ENCODE measurements at regions of chr6 and their contacts with region 1.

Region 1: GRCh38 chr6:99467509-99468106 is 42.5 kb upstream of the PNISR start:
- DNase-seq: peak in 5 of 9 donors; percentile 4 to 39 (median 26)
- ATAC-seq: no peak
- H3K4me3 ChIP-seq: no peak overlapping the region
- H3K4me3 Mint-ChIP-seq: no peak overlapping the region
- H3K27ac ChIP-seq: no peak overlapping the region
- H3K27ac Mint-ChIP-seq: no peak overlapping the region
- H3K4me1 ChIP-seq: no peaks in the 10 kb centered on the region
- H3K4me1 Mint-ChIP-seq: no peaks in the 10 kb centered on the region
- H3K27me3 ChIP-seq: no peaks in the 10 kb centered on the region
- H3K27me3 Mint-ChIP-seq: no peaks in the 10 kb centered on the region

Region 2: DNA sequence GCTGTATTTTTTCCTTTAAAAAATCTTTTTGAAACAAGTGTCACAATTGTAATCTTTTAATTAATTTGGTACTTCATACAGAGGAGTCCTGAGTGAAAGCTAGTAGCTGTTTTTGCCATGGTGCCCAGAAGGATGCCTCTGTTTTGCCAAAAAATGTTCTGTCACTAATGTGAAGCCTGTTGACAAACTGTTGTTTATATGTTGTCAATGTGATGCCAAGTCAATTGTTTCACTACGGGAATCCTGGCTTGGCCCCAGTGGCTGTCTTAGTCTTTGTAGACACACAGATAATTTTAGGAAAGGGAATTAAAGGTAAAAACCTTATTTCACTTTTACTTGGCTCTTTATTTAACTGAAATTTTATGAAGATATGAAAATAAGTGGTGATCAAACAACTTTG is 1478.2 kb before region 1 on chr6:
- CTCF ChIA-PET with region 1: no interaction called
- POLR2A ChIA-PET with region 1: no interaction called
- intact Hi-C with region 1: no loop called
- DNase-seq: no peak
- ATAC-seq: no peak
- H3K4me3 ChIP-seq: no peak overlapping the region
- H3K4me3 Mint-ChIP-seq: no peak overlapping the region
- H3K27ac ChIP-seq: no peak overlapping the region
- H3K27ac Mint-ChIP-seq: no peak overlapping the region
- H3K4me1 ChIP-seq: no peaks in the 10 kb centered on the region
- H3K4me1 Mint-ChIP-seq: no peaks in the 10 kb centered on the region
- H3K27me3 ChIP-seq: no peaks in the 10 kb centered on the region
- H3K27me3 Mint-ChIP-seq: no peaks in the 10 kb centered on the region

Region 3: DNA sequence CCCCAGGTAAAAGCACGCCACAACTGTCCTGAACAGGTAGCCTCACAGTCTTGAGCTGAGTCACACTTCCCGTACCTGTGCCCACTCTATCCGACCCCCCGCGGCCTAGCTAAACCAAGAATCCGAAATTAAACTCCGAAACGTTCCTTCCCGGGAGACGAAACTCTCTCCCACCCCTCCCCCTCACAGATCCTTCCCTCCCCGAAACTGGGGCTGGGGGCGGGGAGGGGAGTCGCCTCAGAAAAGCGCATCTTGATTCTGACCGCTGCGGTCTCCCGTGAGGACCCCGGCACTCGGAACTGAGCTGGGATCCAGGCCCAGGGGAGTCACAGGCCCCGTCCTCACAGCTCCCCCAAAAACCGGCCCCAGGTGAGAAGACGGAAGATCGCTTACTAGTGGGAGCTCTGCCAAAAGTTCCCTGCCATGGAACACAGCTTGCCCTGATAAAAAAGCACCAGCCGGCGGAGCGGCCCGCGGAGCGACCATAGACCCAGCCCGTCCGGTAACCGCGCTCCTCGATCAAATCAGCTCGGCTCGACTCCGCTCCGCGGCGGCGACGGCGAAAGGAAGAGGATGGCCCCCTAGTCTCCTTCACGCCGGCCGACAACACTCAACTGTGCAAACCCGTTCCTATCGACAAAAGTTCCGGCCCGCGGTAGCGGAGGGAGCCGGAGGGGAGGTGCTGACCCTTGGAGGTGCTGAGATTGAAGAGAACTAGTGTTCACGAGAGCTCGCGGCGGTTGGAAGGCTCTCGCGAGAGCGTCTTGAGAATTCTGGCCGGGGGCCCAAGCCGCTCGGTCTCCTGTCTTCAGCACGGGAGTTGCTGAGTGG is 100.7 kb after region 1 on chr6 and contains the start of gene CCNC:
- CTCF ChIA-PET with region 1: no interaction called
- POLR2A ChIA-PET with region 1: interaction called, 3 read pairs
- intact Hi-C with region 1: loop called in 1 of 2 experiments (anchors 5 kb)
- DNase-seq: peak; percentile 74 to 91 (median 87)
- ATAC-seq: peak; percentile 99
- H3K4me3 ChIP-seq: peak within 1 kb of the TSS; percentile 87
- H3K4me3 Mint-ChIP-seq: peak within 1 kb of the TSS; percentile 92 to 100 (median 98)
- H3K27ac ChIP-seq: peak within 1 kb of the TSS; percentile 84
- H3K27ac Mint-ChIP-seq: peak within 1 kb of the TSS; percentile 89 to 99 (median 94)
- H3K4me1 ChIP-seq: peaks cover 7 to 9% of the 10 kb centered on the region in 2 donors
- H3K4me1 Mint-ChIP-seq: peaks cover 20 to 55% (median 38%) of the 10 kb centered on the region in 7 donors
- H3K27me3 ChIP-seq: no peaks in the 10 kb centered on the region
- H3K27me3 Mint-ChIP-seq: peaks cover 0 to under 1% (median 0%) of the 10 kb centered on the region in 5 donors
- total RNA-seq, gene CCNC: 31.4 to 45.4 (median 37.3) TPM

Region 4: GRCh38 chr6:99746261-99746895 is 278.8 kb after region 1 on chr6:
- CTCF ChIA-PET with region 1: interaction called, 32 read pairs
- POLR2A ChIA-PET with region 1: no interaction called
- intact Hi-C with region 1: loop called (anchors 1 kb)
- DNase-seq: peak in 8 of 9 donors; percentile 31 to 63 (median 48)
- ATAC-seq: peak; percentile 86
- H3K4me3 ChIP-seq: no peak overlapping the region
- H3K4me3 Mint-ChIP-seq: no peak overlapping the region
- H3K27ac ChIP-seq: no peak overlapping the region
- H3K27ac Mint-ChIP-seq: no peak overlapping the region
- H3K4me1 ChIP-seq: no peaks in the 10 kb centered on the region
- H3K4me1 Mint-ChIP-seq: no peaks in the 10 kb centered on the region
- H3K27me3 ChIP-seq: no peaks in the 10 kb centered on the region
- H3K27me3 Mint-ChIP-seq: peaks cover 20 to 43% (median 33%) of the 10 kb centered on the region in 5 donors

Region 5: DNA sequence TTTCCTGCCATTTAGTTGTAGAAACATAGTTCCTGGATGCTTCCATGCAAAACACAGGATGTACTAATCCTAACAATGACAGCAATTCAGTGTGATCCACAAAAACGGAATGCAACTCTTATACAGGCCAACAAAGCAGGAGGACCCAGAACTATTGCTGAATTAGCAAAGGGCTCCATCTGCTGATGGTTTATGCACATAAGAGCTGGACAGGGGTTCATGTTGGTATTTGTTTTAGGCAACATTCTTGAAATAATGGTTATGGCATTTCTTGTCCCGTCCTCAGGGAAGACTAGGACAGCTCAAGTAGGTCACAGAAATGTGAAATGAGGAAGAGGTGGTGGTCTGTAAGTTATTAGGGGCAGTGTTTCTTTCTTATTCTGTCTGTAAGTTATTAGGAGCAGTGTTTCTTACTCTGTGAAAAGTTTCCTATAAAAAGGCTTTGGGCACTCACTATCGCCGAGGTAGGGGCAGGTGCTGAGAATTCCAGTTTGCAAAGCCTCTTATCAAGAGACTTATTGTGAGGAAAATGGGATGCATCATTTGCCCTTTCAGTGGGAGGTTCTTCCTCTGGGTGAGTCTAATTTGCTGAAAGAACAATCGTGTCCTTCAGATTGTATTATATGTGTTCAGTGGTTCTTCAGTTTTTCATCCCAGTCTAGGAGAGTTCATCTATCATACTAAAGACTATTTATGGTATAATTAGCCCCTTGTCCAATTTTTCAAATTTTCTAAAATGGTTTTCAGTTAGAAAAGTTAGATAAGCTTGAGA is 355.3 kb after region 1 on chr6:
- CTCF ChIA-PET with region 1: no interaction called
- POLR2A ChIA-PET with region 1: no interaction called
- intact Hi-C with region 1: loop called (anchors 2 kb)
- DNase-seq: peak in 5 of 9 donors; percentile 6 to 34 (median 11)
- ATAC-seq: peak; percentile 37
- H3K4me3 ChIP-seq: peak overlapping the region; percentile 13
- H3K4me3 Mint-ChIP-seq: peak overlapping the region in 9 of 10 donors; percentile 1 to 84 (median 62)
- H3K27ac ChIP-seq: no peak overlapping the region
- H3K27ac Mint-ChIP-seq: peak overlapping the region in 2 of 9 donors; percentile 36 to 54
- H3K4me1 ChIP-seq: peaks cover 0 to 4% of the 10 kb centered on the region in 2 donors
- H3K4me1 Mint-ChIP-seq: peaks cover 0 to 10% (median 8%) of the 10 kb centered on the region in 7 donors
- H3K27me3 ChIP-seq: no peaks in the 10 kb centered on the region
- H3K27me3 Mint-ChIP-seq: peaks cover 7 to 40% (median 25%) of the 10 kb centered on the region in 5 donors

Region 6: DNA sequence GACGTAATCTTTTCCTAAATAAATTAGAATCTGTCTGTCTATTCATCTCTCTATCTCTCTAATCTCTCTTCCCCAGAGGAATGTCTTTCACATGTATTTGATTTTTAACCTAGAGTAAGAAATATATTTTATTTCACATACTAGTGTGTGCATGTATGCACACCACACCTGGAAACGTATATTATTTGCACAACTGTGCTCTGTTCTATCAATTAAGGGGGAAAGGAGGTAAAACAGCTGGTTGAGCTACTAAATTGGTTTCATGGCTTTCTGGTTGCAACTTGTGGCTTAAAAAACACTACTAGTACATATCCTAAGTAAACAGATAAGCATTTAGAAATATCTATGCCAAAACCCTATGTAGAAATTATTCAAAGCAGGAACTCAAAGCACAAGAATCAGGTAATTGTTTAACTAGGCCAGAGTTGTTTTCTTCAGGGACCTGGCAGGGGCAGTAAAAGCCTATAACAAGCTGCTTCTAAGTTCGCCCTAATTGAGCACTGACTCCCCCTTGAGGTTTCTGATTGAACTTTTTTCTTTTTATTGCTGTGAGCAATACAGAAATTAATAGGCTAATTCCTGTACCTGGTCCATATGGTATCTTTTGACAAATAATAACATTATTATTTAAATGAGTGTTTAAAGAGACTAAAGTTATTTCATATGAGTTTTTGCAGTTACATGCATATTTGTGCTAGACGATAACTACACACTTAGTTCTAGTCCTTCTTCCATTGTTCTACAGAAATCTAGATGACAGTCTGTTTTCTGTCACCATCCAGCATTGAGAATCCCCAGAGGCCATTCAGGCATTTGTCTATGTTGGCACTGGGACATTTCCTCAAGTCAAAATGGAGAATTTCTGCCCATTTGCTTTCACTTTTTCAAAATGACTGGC is 437.9 kb after region 1 on chr6:
- CTCF ChIA-PET with region 1: no interaction called
- POLR2A ChIA-PET with region 1: no interaction called
- intact Hi-C with region 1: loop called (anchors 5 to 10 kb)
- DNase-seq: peak in 3 of 9 donors; percentile 2 to 24 (median 4)
- ATAC-seq: no peak
- H3K4me3 ChIP-seq: no peak overlapping the region
- H3K4me3 Mint-ChIP-seq: no peak overlapping the region
- H3K27ac ChIP-seq: no peak overlapping the region
- H3K27ac Mint-ChIP-seq: no peak overlapping the region
- H3K4me1 ChIP-seq: no peaks in the 10 kb centered on the region
- H3K4me1 Mint-ChIP-seq: no peaks in the 10 kb centered on the region
- H3K27me3 ChIP-seq: no peaks in the 10 kb centered on the region
- H3K27me3 Mint-ChIP-seq: peaks cover 2 to 24% (median 7%) of the 10 kb centered on the region in 5 donors

Region 7: DNA sequence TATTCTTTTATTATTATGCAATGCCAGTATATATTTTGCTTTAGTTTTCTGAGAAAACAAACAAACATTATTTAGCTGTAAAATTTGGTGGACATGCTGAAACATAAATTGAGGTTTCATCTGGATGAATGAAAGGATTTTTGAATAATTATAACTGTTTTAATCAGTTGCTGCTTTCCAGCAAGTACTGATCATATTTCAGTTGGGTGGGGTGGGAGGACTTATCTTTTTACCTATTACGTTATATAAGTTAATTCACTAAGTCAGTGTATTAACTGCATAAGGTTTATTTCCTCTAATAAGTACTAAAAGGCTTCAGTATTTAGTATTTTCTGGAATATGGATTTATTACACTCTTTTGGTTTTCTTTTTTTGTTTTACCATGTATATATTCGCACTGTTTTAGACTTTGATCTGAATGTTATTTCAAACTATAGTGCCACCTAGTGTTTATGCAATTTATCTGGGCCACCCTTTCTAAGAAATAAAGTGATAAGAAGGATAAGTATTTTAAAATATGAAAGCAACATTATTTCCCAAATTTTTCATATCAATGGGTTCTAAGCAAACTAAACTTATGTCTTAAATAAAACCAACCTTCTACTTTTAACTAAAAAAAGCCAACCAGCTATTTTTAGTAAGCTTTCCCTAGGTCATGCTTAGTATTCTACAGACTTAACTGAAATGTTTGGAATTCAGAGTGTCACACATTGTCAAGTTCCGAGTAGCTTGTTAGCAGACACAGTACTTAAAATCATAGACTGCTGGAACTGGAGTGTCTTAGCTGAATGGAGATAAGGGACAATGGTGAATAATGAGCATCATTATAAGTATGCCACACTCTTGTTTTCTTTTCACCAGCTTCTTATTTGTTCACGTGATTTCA is 631.8 kb after region 1 on chr6:
- CTCF ChIA-PET with region 1: no interaction called
- POLR2A ChIA-PET with region 1: no interaction called
- intact Hi-C with region 1: loop called in 1 of 2 experiments (anchors 5 kb)
- DNase-seq: no peak
- ATAC-seq: no peak
- H3K4me3 ChIP-seq: no peak overlapping the region
- H3K4me3 Mint-ChIP-seq: no peak overlapping the region
- H3K27ac ChIP-seq: no peak overlapping the region
- H3K27ac Mint-ChIP-seq: no peak overlapping the region
- H3K4me1 ChIP-seq: no peaks in the 10 kb centered on the region
- H3K4me1 Mint-ChIP-seq: no peaks in the 10 kb centered on the region
- H3K27me3 ChIP-seq: no peaks in the 10 kb centered on the region
- H3K27me3 Mint-ChIP-seq: peaks cover 4 to 15% (median 9%) of the 10 kb centered on the region in 5 donors

Region 8: GRCh38 chr6:100664274-100665040 is 1196.8 kb after region 1 on chr6:
- CTCF ChIA-PET with region 1: no interaction called
- POLR2A ChIA-PET with region 1: no interaction called
- intact Hi-C with region 1: loop called in 1 of 2 experiments (anchors 5 kb)
- DNase-seq: peak in 4 of 9 donors; percentile 4 to 27 (median 22)
- ATAC-seq: peak; percentile 59
- H3K4me3 ChIP-seq: no peak overlapping the region
- H3K4me3 Mint-ChIP-seq: no peak overlapping the region
- H3K27ac ChIP-seq: no peak overlapping the region
- H3K27ac Mint-ChIP-seq: peak overlapping the region in 5 of 9 donors; percentile 1 to 74 (median 22)
- H3K4me1 ChIP-seq: no peaks in the 10 kb centered on the region
- H3K4me1 Mint-ChIP-seq: peaks cover 0 to 12% (median 5%) of the 10 kb centered on the region in 7 donors
- H3K27me3 ChIP-seq: no peaks in the 10 kb centered on the region
- H3K27me3 Mint-ChIP-seq: no peaks in the 10 kb centered on the region